Mammary epithelial cell (primary cell): ENCODE measurements at regions of chr16 and their contacts with region 1.

Region 1: DNA sequence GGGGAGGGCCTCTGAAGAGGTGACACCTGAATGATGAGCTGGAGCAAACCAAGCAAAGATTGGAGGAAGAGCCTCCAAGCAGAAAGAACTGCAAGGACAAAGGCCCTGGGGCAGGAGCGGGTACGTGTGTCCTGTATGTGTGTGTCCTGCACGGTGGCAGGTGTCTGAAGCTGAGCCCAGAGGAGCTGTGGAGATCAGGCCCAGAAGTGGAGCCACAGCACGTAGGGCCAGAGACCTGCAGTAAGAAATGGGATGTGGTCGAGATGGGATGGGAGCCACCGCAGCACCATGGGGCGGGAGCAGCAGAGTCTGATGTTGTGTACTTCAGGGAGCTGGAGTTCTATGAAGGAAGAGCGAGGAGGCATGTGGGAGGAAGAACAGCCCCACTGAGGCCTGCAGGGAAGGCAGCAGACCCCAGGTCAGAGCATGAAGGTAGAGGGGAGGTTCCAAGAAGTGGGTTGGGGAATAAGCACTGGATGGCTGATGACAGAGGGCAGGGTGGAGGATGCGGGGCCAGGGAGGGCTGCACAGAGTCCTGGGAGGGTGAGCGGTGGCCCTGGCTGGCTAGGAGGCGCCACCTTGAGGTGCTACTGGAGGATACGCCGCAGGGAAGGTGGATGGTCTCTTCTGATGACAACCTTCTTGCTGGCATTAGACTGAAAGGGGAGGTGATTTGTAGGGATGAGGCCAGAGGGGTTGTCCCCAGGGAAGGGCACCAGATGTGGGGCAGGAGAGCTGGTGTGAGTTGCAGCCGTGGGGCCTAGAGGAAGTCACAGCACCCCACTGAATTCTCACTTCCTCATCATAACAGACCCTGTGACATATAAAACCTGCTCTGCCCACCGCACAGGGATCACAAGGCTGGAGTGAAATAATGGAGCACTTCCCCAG is 10.6 kb upstream of the CETP start:
- DNase-seq: peak; percentile 16
- H3K4me3 ChIP-seq: no peak overlapping the region
- H3K27ac ChIP-seq: no peak overlapping the region
- H3K4me1 ChIP-seq: no peaks in the 10 kb centered on the region
- H3K27me3 ChIP-seq: no peaks in the 10 kb centered on the region
- CTCF ChIP-seq: peak; percentile 55 to 76

Region 2: GRCh38 chr16:56866943-56867830 is 83.9 kb before region 1 on chr16:
- CTCF ChIA-PET with region 1: interaction called, 5 read pairs
- dilution Hi-C with region 1: loop called (anchors 5 kb)
- in situ Hi-C with region 1: loop called in 1 of 2 experiments (anchors 10 kb)
- intact Hi-C with region 1: loop called (anchors 1 kb)
- DNase-seq: peak; percentile 19
- H3K4me3 ChIP-seq: no peak overlapping the region
- H3K27ac ChIP-seq: no peak overlapping the region
- H3K4me1 ChIP-seq: no peaks in the 10 kb centered on the region
- H3K27me3 ChIP-seq: no peaks in the 10 kb centered on the region
- CTCF ChIP-seq: peak; percentile 63 to 72

Region 3: GRCh38 chr16:56999409-57000270 is 48.5 kb after region 1 on chr16:
- CTCF ChIA-PET with region 1: no interaction called
- dilution Hi-C with region 1: loop called (anchors 5 kb)
- in situ Hi-C with region 1: no loop called
- intact Hi-C with region 1: no loop called
- DNase-seq: no peak
- H3K4me3 ChIP-seq: no peak overlapping the region
- H3K27ac ChIP-seq: no peak overlapping the region
- H3K4me1 ChIP-seq: peaks cover 18% of the 10 kb centered on the region
- H3K27me3 ChIP-seq: no peaks in the 10 kb centered on the region
- CTCF ChIP-seq: no peak

Region 4: GRCh38 chr16:57029161-57030160 is 78.3 kb after region 1 on chr16:
- CTCF ChIA-PET with region 1: no interaction called
- dilution Hi-C with region 1: loop called (anchors 5 kb)
- in situ Hi-C with region 1: no loop called
- intact Hi-C with region 1: no loop called
- DNase-seq: peak; percentile 60
- H3K4me3 ChIP-seq: no peak overlapping the region
- H3K27ac ChIP-seq: no peak overlapping the region
- H3K4me1 ChIP-seq: peaks cover 18% of the 10 kb centered on the region
- H3K27me3 ChIP-seq: no peaks in the 10 kb centered on the region
- CTCF ChIP-seq: no peak